ENCODE measurements at regions of chr20 and their contacts with region 1.

Region 1: DNA sequence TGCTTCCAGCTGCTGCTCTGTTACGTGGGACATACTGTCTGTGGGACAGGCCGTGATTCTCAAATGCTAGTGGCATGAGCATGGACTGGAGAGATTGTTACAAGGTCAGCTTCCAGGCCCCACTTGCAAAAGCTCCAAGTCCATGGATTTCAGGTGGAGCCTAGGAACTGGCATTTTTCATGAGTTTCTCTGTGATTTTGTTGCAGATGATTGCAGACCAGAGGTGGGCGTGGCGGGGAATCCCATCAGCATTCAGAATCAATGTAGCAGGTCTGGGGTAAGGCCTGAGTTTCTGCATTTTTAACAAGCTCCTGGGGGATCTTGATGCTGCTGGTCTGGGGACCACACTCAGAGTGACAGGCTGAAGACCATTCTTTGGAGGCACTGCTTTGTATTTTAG is 2.4 kb upstream of the CDH4 start:
- DNase-seq: no peak
- H3K4me3 ChIP-seq: no peak overlapping the region
- H3K27ac ChIP-seq: no peak overlapping the region
- H3K4me1 ChIP-seq: no peaks in the 10 kb centered on the region
- H3K27me3 ChIP-seq: peaks cover 36% of the 10 kb centered on the region
- CTCF ChIP-seq: no peak

Region 2: DNA sequence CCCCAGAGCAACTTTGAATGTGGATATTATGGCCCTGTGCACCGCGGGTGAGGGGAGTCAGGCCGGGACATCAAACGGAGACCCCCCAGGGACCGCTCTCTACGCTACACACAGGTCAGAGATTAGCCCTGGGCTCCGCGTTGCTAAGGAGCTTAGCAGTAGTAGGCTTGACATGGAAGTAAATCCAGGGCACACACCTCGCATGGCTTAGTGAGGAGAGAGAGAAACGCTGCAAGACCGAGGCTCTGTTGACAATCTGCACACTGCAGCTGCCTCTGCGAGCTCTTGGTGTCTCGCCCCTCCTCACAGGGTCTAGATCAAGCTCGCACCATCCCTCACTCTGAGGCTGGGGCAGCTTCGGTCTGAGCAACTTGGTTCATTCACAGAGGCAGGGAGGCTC is 113.7 kb before region 1 on chr20:
- intact Hi-C with region 1: no loop called
- DNase-seq: no peak
- H3K4me3 ChIP-seq: no peak overlapping the region
- H3K27ac ChIP-seq: no peak overlapping the region
- H3K4me1 ChIP-seq: no peaks in the 10 kb centered on the region
- H3K27me3 ChIP-seq: no peaks in the 10 kb centered on the region
- CTCF ChIP-seq: no peak

Region 3: GRCh38 chr20:61268024-61268423 is 18.4 kb after region 1 on chr20:
- intact Hi-C with region 1: loop called (anchors 2 kb)
- DNase-seq: no peak
- H3K4me3 ChIP-seq: no peak overlapping the region
- H3K27ac ChIP-seq: no peak overlapping the region
- H3K4me1 ChIP-seq: no peaks in the 10 kb centered on the region
- H3K27me3 ChIP-seq: no peaks in the 10 kb centered on the region
- CTCF ChIP-seq: no peak

Region 4: GRCh38 chr20:62088237-62089127 is 838.9 kb after region 1 on chr20:
- intact Hi-C with region 1: no loop called
- DNase-seq: no peak
- H3K4me3 ChIP-seq: no peak overlapping the region
- H3K27ac ChIP-seq: no peak overlapping the region
- H3K4me1 ChIP-seq: no peaks in the 10 kb centered on the region
- H3K27me3 ChIP-seq: no peaks in the 10 kb centered on the region
- CTCF ChIP-seq: no peak